ENCODE measurements at regions of chr1 and their contacts with region 1.

Region 1: DNA sequence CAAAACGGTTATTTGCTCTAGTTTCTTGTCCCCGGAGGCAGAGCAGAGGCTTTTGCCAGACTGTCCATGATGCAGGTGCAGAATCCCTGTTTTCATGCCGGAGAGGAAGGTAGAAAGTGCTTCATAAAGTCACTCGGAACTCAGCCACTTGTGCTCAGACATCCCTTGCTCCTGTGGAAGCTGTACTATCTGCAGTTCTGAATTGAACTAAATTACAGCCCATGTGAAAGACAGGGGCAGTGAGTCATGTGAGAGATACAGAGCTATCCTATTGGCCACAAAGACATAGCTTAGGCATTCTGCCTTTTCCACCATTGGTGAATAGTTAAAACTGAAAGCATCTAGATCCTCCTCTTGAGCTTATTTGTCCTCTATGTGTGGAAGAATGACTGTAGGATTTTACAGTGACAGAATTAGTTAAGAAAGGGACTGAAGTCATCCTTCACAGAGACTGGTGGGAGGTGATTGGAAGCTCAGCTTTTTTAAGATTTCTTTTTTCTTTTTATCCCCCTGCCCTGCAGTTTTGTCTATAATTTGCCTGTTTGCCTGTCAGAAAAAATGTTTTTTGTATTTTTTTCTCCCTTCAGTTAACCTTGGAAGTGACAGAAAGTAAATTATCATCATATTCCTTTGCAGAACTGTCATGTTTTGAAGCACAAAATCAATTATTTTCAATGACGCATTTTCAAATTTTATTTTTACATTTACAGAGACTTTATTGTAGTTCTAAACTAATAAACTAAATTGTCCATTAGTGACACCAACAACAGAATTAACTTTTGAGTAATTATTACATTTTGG is 298.6 kb downstream of the PTPRC start:
- DNase-seq: peak in 8 of 9 donors; percentile 52 to 81 (median 72)
- ATAC-seq: peak; percentile 92
- H3K4me3 ChIP-seq: peak overlapping the region; percentile 47
- H3K4me3 Mint-ChIP-seq: peak overlapping the region in 3 of 10 donors; percentile 88 to 97 (median 92)
- H3K27ac ChIP-seq: peak overlapping the region; percentile 75
- H3K27ac Mint-ChIP-seq: peak overlapping the region in 7 of 9 donors; percentile 88 to 97 (median 92)
- H3K4me1 ChIP-seq: peaks cover 16 to 23% of the 10 kb centered on the region in 2 donors
- H3K4me1 Mint-ChIP-seq: peaks cover 6 to 28% (median 22%) of the 10 kb centered on the region in 7 donors
- H3K27me3 ChIP-seq: no peaks in the 10 kb centered on the region
- H3K27me3 Mint-ChIP-seq: no peaks in the 10 kb centered on the region

Region 2: GRCh38 chr1:198167436-198167934 is 769.9 kb before region 1 on chr1:
- CTCF ChIA-PET with region 1: no interaction called
- POLR2A ChIA-PET with region 1: no interaction called
- intact Hi-C with region 1: loop called in 1 of 2 experiments (anchors 10 kb)
- DNase-seq: peak in 7 of 9 donors; percentile 26 to 66 (median 42)
- ATAC-seq: peak; percentile 77
- H3K4me3 ChIP-seq: peak overlapping the region; percentile 54
- H3K4me3 Mint-ChIP-seq: peak overlapping the region; percentile 60 to 88 (median 78)
- H3K27ac ChIP-seq: peak overlapping the region; percentile 71
- H3K27ac Mint-ChIP-seq: peak overlapping the region; percentile 84 to 98 (median 95)
- H3K4me1 ChIP-seq: peaks cover 84 to 90% of the 10 kb centered on the region in 2 donors
- H3K4me1 Mint-ChIP-seq: peaks cover 55 to 96% (median 93%) of the 10 kb centered on the region in 7 donors
- H3K27me3 ChIP-seq: no peaks in the 10 kb centered on the region
- H3K27me3 Mint-ChIP-seq: no peaks in the 10 kb centered on the region

Region 3: DNA sequence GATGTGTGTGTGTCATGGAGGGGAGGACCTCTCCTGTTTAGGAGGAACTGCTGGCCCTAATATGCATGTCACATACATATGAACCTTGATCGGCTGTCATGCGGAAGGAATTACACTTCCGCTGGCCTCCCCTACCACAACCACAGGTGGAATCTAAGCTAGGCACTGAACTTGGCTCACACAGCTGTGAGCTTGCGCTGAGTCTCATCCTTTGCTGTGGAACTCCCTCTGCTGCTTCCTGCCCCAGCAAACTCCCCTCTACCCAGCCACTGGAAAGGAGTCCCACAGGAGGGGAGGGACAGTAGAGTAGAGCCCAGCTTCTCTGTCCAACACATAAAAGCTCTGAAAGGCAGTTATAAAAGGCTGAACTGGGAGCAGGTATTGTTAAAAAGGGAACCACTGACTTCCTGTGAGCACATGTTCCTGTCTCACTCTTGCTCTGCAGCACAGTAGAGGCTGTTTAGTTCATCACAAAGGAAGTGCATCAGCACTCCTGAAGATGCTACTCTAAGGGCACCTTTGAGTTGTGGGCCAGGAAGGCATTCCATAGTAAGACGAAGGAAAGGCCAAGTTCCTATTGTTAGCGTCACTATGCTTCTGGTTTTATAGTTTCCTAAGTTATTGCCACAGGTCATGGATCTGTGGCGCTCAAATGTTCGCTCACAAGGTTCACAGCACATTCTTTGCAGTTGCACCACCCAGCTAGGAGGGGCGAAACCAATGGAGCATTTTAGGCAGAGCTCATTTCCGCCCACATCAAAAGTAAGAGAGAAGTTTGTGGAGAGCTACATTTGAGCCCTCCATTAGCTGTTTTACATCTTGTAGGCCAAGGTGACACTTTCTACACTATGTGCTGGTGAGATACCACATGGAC is 316.2 kb before region 1 on chr1:
- CTCF ChIA-PET with region 1: no interaction called
- POLR2A ChIA-PET with region 1: interaction called, 4 read pairs
- intact Hi-C with region 1: loop called (anchors 5 to 10 kb)
- DNase-seq: peak; percentile 25 to 82 (median 76)
- ATAC-seq: peak; percentile 87
- H3K4me3 ChIP-seq: peak overlapping the region; percentile 48
- H3K4me3 Mint-ChIP-seq: peak overlapping the region; percentile 65 to 91 (median 84)
- H3K27ac ChIP-seq: peak overlapping the region; percentile 67
- H3K27ac Mint-ChIP-seq: peak overlapping the region; percentile 89 to 99 (median 96)
- H3K4me1 ChIP-seq: peaks cover 73 to 93% of the 10 kb centered on the region in 2 donors
- H3K4me1 Mint-ChIP-seq: peaks cover 58 to 98% (median 85%) of the 10 kb centered on the region in 7 donors
- H3K27me3 ChIP-seq: no peaks in the 10 kb centered on the region
- H3K27me3 Mint-ChIP-seq: no peaks in the 10 kb centered on the region

Region 4: GRCh38 chr1:198892065-198892464 is 45.4 kb before region 1 on chr1:
- CTCF ChIA-PET with region 1: interaction called, 4 read pairs
- POLR2A ChIA-PET with region 1: interaction called, 10 read pairs
- intact Hi-C with region 1: no loop called
- DNase-seq: no peak
- ATAC-seq: no peak
- H3K4me3 ChIP-seq: no peak overlapping the region
- H3K4me3 Mint-ChIP-seq: no peak overlapping the region
- H3K27ac ChIP-seq: no peak overlapping the region
- H3K27ac Mint-ChIP-seq: no peak overlapping the region
- H3K4me1 ChIP-seq: no peaks in the 10 kb centered on the region
- H3K4me1 Mint-ChIP-seq: peaks cover 3 to 35% (median 6%) of the 10 kb centered on the region in 7 donors
- H3K27me3 ChIP-seq: no peaks in the 10 kb centered on the region
- H3K27me3 Mint-ChIP-seq: no peaks in the 10 kb centered on the region

Region 5: DNA sequence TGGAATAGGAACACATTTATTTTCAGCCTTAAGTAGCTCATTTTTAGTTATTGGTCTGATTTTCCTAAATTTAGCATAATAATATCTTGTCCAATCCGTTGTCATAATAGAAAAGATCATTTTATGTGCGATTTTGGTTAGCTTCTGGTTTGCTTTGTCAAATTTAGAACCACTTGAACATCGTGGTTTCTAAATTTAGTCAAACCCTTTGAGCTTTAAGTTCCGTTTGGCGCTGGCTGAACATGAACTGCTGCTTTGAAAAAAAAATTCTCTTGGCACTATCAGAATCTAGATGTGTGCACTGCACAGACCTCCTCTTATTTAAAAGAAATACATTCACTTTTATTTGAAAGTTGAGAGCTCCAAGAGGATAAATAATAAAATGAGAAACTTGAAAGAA is 72.0 kb after region 1 on chr1:
- CTCF ChIA-PET with region 1: no interaction called
- POLR2A ChIA-PET with region 1: no interaction called
- intact Hi-C with region 1: loop called in 1 of 2 experiments (anchors 2 kb)
- DNase-seq: peak in 4 of 9 donors; percentile 7 to 24 (median 14)
- ATAC-seq: no peak
- H3K4me3 ChIP-seq: peak overlapping the region; percentile 3
- H3K4me3 Mint-ChIP-seq: peak overlapping the region; percentile 3 to 74 (median 56)
- H3K27ac ChIP-seq: no peak overlapping the region
- H3K27ac Mint-ChIP-seq: peak overlapping the region in 5 of 9 donors; percentile 23 to 77 (median 44)
- H3K4me1 ChIP-seq: peaks cover 8 to 19% of the 10 kb centered on the region in 2 donors
- H3K4me1 Mint-ChIP-seq: peaks cover 19 to 52% (median 26%) of the 10 kb centered on the region in 7 donors
- H3K27me3 ChIP-seq: no peaks in the 10 kb centered on the region
- H3K27me3 Mint-ChIP-seq: no peaks in the 10 kb centered on the region

Region 6: DNA sequence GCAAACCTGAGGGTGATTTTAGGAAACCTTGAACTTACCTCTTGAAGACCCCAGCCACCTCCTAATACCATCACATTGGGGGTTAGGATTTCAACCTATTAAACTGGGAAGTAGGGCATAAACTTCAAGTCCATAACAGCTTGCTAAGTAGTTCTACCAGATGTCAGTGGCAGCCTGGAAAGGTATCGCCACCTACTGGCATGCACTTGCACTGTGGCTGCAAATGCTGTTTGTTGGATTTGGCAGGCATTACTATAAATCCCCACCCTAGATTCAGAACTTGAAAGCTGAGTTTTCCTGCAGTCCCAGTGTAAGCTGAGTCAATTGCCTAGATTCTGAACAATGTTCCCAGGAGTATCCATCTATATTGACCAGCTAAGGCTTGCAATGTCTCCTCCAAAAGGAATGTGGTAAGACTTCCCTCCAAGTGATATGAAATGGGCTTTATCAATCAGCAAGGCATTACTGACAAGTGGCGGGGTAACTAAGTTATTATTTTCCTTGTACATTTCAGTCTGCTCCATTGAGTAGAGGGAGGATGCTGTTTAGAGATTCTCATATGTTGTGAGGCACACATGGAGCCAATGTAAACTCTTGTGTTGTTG is 175.9 kb after region 1 on chr1:
- CTCF ChIA-PET with region 1: interaction called, 5 read pairs
- POLR2A ChIA-PET with region 1: no interaction called
- intact Hi-C with region 1: loop called (anchors 1 to 5 kb)
- DNase-seq: peak; percentile 26 to 64 (median 44)
- ATAC-seq: peak; percentile 80
- H3K4me3 ChIP-seq: no peak overlapping the region
- H3K4me3 Mint-ChIP-seq: peak overlapping the region in 1 of 10 donors; percentile 7
- H3K27ac ChIP-seq: no peak overlapping the region
- H3K27ac Mint-ChIP-seq: peak overlapping the region in 1 of 9 donors; percentile 4
- H3K4me1 ChIP-seq: no peaks in the 10 kb centered on the region
- H3K4me1 Mint-ChIP-seq: peaks cover 0 to 22% (median 0%) of the 10 kb centered on the region in 7 donors
- H3K27me3 ChIP-seq: no peaks in the 10 kb centered on the region
- H3K27me3 Mint-ChIP-seq: no peaks in the 10 kb centered on the region

Measured in naive thymus-derived CD4-positive, alpha-beta T cell (primary cell).